OCI-LY7 (cell line): ENCODE measurements at regions of chr6 and their contacts with region 1.

Region 1: DNA sequence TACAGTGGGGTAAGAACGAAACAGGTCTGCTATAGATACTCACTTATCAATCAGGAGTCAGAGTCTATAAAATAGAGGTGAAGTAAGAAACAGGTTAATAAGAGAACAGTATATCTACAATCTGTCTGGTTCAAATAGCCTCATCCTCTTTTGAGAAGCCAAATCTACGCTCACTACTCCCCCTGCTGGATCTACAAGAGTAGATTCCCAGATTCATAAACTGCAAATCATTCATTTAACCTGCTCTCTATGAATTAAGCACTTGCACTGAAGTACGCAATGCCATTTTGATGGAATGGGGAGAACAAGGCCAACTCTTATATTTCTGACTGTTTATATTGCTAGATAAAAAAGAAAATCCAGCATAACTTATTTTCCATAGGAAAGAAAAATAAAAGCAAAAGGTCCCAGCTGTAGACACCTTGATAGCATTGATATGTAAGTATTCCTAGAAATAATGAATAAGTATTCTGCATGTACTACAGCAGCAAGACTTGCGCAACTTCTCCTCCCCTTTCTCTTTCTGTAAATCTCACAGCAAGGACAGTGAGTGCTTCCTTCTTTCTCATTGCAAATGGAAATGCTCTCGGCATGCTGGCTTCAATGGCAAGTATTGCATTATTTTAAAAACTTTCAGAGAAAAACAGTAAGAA is 92.3 kb downstream of the RFX6 start:
- DNase-seq: peak; percentile 57
- H3K4me3 ChIP-seq: no peak overlapping the region
- H3K27ac ChIP-seq: no peak overlapping the region
- H3K4me1 ChIP-seq: no peaks in the 10 kb centered on the region
- CTCF ChIP-seq: peak; percentile 87

Region 2: DNA sequence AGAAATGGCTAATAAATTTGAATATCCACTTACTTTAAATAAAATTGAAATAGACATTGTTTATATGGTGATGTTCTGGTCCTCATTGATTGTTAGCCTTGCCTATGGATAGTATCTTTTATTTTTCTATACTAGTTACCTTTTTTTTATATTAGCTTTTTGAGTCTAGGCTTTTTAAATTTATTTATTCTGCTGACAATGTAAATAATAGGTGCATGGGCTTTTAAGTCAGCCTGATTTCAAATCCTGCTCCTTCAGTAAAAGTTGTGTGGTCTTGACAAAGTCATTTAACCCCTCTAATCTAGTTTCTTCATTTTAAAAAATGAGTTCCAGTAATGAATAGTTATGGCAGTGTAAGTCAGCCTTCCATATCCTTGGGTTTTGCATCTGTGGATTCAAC is 242.4 kb before region 1 on chr6:
- CTCF ChIA-PET with region 1: no interaction called
- POLR2A ChIA-PET with region 1: no interaction called
- intact Hi-C with region 1: no loop called
- DNase-seq: no peak
- H3K4me3 ChIP-seq: no peak overlapping the region
- H3K27ac ChIP-seq: no peak overlapping the region
- H3K4me1 ChIP-seq: no peaks in the 10 kb centered on the region
- CTCF ChIP-seq: no peak

Region 3: DNA sequence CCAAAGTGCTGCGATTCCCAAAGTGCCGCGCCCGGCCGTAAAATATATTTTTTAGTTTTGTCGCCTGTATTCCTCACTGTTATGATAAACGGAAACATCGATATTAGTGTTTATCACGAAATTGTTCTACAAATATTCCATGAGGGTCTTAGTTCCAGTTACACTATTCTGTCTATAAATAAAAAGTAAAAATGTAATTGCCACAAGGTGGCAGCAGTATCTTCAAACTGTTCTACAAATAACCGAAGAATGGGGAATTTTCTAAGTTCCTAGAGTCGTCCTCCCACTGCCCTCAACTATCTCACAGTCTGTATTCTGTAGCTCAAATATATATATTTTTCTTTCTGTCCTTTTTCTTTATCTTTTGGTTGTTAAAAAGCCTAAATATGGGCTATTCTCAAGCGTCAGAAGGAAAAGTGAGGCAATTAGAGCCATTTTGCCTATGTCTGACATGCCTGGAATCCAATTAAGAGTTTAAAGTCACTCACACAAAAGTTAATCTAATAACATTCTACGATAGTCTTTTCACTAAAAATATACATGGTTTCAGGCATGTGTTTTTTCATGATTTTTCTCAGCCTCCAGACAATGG is 189.7 kb before region 1 on chr6:
- CTCF ChIA-PET with region 1: no interaction called
- POLR2A ChIA-PET with region 1: no interaction called
- intact Hi-C with region 1: loop called (anchors 5 kb)
- DNase-seq: peak; percentile 46
- H3K4me3 ChIP-seq: no peak overlapping the region
- H3K27ac ChIP-seq: no peak overlapping the region
- H3K4me1 ChIP-seq: no peaks in the 10 kb centered on the region
- CTCF ChIP-seq: peak; percentile 82

Region 4: DNA sequence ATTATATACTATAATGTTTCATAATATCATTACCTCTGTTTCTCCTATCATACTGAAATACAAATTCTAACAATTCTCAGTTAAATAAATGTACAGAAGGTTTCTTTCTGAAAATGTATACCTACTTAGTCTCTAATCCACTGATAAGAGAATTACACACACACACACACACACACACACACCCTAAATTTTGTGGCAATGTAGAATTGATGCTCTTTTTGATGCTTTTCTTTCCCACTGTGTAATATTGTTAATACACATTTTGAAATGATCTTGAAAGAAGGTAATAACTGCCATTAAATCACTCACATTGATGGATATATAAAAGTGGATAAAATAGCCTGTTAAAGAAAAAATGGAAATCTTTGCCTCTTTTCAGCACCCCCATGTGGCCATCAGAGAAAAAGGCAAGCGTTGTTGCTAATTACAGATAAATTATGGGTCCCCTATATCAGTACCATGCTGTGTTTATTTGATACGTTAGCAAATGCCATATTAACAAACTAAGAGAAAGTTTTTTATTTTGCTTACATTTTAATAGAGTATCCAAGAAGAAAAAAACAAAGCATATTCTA is 219.4 kb after region 1 on chr6:
- CTCF ChIA-PET with region 1: no interaction called
- POLR2A ChIA-PET with region 1: no interaction called
- intact Hi-C with region 1: loop called (anchors 1 kb)
- DNase-seq: peak; percentile 16
- H3K4me3 ChIP-seq: no peak overlapping the region
- H3K27ac ChIP-seq: no peak overlapping the region
- H3K4me1 ChIP-seq: no peaks in the 10 kb centered on the region
- CTCF ChIP-seq: peak; percentile 81

Region 5: DNA sequence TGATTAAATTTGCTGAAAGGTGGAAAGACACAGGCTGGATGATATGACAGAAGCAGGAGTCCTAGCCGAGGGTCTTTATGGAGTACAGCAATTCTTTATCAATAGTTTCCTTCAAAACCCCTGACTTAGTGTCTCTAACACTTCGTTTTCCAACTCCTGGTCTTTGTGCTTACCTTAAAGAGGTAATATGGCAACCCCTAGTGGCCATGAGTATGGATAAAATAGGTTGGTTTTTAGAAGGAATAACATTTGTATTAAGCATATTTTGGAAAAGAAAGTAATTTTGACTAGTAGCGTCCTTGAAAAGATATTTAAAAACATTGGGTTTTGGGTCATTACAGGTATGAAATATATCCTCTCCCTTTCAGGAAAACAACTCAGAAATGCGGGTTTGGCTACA is 347.9 kb after region 1 on chr6:
- CTCF ChIA-PET with region 1: no interaction called
- POLR2A ChIA-PET with region 1: no interaction called
- intact Hi-C with region 1: loop called (anchors 2 kb)
- DNase-seq: peak; percentile 1
- H3K4me3 ChIP-seq: no peak overlapping the region
- H3K27ac ChIP-seq: no peak overlapping the region
- H3K4me1 ChIP-seq: no peaks in the 10 kb centered on the region
- CTCF ChIP-seq: peak; percentile 62